ENCODE measurements at regions of chr7 and their contacts with region 1.

Region 1: GRCh38 chr7:82729172-82730030 is 285.8 kb upstream of the CACNA2D1 start:
- DNase-seq: peak; percentile 35
- H3K4me3 Mint-ChIP-seq: no peak overlapping the region
- H3K27ac Mint-ChIP-seq: no peak overlapping the region
- H3K4me1 Mint-ChIP-seq: no peaks in the 10 kb centered on the region
- H3K27me3 Mint-ChIP-seq: no peaks in the 10 kb centered on the region
- CTCF ChIP-seq: peak; percentile 33

Region 2: GRCh38 chr7:82494420-82494819 is 235.0 kb before region 1 on chr7:
- CTCF ChIA-PET with region 1: no interaction called
- intact Hi-C with region 1: no loop called
- DNase-seq: no peak
- H3K4me3 Mint-ChIP-seq: no peak overlapping the region
- H3K27ac Mint-ChIP-seq: no peak overlapping the region
- H3K4me1 Mint-ChIP-seq: no peaks in the 10 kb centered on the region
- H3K27me3 Mint-ChIP-seq: peaks cover 17% of the 10 kb centered on the region
- CTCF ChIP-seq: no peak

Region 3: DNA sequence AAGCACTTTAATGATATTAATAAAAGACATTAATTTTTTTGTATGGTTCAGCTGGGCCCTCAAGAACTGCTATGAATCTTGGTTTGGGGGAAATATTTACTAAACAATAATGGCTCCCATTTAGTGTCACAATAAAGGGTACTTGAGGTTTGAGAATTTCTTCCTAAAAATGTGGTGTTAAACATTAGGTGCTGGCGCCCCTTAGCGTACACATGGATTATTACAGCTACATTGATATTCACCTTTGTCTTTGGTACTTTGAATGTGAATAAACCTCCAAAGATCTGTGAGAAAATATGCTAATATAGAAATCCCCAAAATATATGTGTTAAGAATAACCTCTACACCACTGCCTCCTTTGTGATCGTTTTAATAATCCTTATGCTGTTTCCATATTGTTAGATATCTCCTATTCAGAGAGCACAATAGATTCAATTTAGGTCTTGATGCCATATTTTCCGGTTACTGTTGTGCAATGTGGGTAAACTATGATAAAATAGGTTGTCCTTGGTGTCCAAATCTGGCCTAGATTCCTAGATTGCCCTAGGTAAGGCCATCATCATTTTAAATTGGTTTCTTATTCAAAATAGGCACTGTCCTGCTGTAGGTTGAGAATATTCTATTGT is 124.0 kb before region 1 on chr7:
- CTCF ChIA-PET with region 1: interaction called, 4 read pairs
- intact Hi-C with region 1: loop called (anchors 5 kb)
- DNase-seq: peak; percentile 29
- H3K4me3 Mint-ChIP-seq: no peak overlapping the region
- H3K27ac Mint-ChIP-seq: no peak overlapping the region
- H3K4me1 Mint-ChIP-seq: no peaks in the 10 kb centered on the region
- H3K27me3 Mint-ChIP-seq: no peaks in the 10 kb centered on the region
- CTCF ChIP-seq: no peak

Region 4: DNA sequence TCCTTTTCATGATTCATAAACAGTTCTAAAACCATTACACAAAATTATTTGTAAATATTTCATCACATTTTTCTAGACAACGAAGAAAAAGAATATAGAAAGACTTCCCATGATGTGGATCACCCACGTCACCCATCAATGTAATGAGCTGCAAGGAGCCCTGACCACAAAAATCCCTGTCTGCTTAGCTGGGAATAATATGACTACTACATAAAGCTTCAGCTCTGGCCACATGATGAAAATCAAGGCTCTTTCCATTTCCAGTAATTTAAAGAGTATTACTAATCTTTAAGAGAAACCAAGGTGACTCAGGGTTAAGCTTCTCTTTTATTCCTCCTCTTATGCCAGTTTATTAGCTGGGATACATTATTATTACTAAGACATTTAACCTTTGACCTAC is 105.1 kb before region 1 on chr7:
- CTCF ChIA-PET with region 1: no interaction called
- intact Hi-C with region 1: loop called (anchors 2 kb)
- DNase-seq: no peak
- H3K4me3 Mint-ChIP-seq: no peak overlapping the region
- H3K27ac Mint-ChIP-seq: no peak overlapping the region
- H3K4me1 Mint-ChIP-seq: no peaks in the 10 kb centered on the region
- H3K27me3 Mint-ChIP-seq: no peaks in the 10 kb centered on the region
- CTCF ChIP-seq: no peak

Region 5: GRCh38 chr7:82823073-82823472 is 93.7 kb after region 1 on chr7:
- CTCF ChIA-PET with region 1: no interaction called
- intact Hi-C with region 1: no loop called
- DNase-seq: no peak
- H3K4me3 Mint-ChIP-seq: no peak overlapping the region
- H3K27ac Mint-ChIP-seq: no peak overlapping the region
- H3K4me1 Mint-ChIP-seq: no peaks in the 10 kb centered on the region
- H3K27me3 Mint-ChIP-seq: no peaks in the 10 kb centered on the region
- CTCF ChIP-seq: no peak